ENCODE measurements at regions of chr17 and their contacts with region 1.

Region 1: DNA sequence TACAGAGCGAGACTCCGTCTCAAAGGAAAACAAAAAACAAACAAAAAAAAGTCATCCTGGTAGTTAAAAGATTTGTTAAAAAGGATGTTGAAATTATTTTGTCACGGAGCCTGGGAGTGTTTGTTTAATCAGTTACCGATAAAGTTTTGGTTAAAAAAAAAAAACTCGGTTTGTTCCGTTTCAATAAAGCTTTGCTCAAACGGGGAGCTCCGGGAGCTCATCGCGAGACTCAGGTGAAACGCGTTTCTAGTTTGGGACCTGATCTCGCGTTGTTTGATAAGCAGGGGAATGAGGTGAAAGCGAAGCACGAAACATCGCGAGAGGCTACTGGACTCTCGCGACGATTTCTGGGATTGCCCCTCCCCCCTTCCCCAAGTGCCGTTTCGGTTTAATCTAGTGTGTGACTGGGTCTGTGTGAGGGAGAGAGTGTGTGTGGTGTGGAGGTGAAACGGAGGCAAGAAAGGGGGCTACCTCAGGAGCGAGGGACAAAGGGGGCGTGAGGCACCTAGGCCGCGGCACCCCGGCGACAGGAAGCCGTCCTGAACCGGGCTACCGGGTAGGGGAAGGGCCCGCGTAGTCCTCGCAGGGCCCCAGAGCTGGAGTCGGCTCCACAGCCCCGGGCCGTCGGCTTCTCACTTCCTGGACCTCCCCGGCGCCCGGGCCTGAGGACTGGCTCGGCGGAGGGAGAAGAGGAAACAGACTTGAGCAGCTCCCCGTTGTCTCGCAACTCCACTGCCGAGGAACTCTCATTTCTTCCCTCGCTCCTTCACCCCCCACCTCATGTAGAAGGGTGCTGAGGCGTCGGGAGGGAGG is at the start of gene CDK12:
- DNase-seq: peak; percentile 90
- ATAC-seq: peak; percentile 85
- H3K4me3 Mint-ChIP-seq: peak within 1 kb of the TSS; percentile 96
- H3K27ac Mint-ChIP-seq: peak within 1 kb of the TSS; percentile 99
- H3K4me1 Mint-ChIP-seq: peaks cover 26% of the 10 kb centered on the region
- H3K27me3 Mint-ChIP-seq: no peaks in the 10 kb centered on the region
- total RNA-seq, gene CDK12: 86.6 to 87.6 TPM

Region 2: GRCh38 chr17:39401412-39402243 is 59.7 kb before region 1 on chr17 and contains the start of gene FBXL20:
- POLR2A ChIA-PET with region 1: interaction called, 18 read pairs
- DNase-seq: peak; percentile 91
- ATAC-seq: peak; percentile 76
- H3K4me3 Mint-ChIP-seq: peak within 1 kb of the TSS; percentile 95
- H3K27ac Mint-ChIP-seq: peak within 1 kb of the TSS; percentile 96
- H3K4me1 Mint-ChIP-seq: peaks cover 19% of the 10 kb centered on the region
- H3K27me3 Mint-ChIP-seq: no peaks in the 10 kb centered on the region
- total RNA-seq, gene FBXL20: 20.0 to 21.0 TPM

Region 3: GRCh38 chr17:39450847-39451581 is 10.3 kb before region 1 on chr17 and contains the start of gene MED1:
- POLR2A ChIA-PET with region 1: interaction called, 122 read pairs
- DNase-seq: peak; percentile 88
- ATAC-seq: peak; percentile 97
- H3K4me3 Mint-ChIP-seq: peak within 1 kb of the TSS; percentile 98
- H3K27ac Mint-ChIP-seq: peak within 1 kb of the TSS; percentile 93
- H3K4me1 Mint-ChIP-seq: peaks cover 9% of the 10 kb centered on the region
- H3K27me3 Mint-ChIP-seq: no peaks in the 10 kb centered on the region
- total RNA-seq, gene MED1: 51.8 to 55.0 TPM